ENCODE measurements at regions of chr2 and their contacts with region 1.

Region 1: DNA sequence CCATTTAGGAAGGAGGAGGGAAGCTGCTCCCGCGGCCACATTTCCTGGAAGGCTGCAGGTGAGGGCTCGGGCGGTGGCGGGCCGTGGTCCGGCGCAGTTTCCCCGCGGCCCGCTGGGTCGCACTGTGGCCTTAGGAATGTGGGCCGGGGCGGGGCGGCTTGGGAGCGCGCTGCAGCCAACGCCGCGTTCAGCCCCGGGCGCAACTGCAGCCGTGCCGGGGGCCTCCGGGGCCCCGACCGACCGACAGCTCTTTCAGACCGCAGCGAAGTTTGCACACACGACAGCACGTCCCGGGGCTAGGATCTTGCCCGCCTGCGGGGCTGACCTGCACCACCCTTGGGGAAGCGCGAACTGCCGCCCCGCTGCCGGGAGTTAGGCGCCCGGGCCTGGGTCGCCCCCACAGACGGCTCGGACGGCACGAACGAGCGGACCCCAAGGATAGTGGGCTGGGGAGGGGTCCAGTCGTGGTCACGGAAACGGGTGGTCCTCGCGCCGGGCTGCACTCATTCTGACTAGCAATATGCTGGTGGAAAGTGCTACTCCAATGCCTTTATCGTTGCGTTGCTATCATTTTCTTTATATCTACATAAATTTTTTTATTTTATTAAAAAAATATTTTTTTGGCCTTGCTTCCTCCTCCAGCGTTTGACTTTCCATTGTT is 69.9 kb upstream of the DLX2 start:
- DNase-seq: no peak
- H3K4me3 ChIP-seq: no peak overlapping the region
- H3K27ac ChIP-seq: no peak overlapping the region
- H3K4me1 ChIP-seq: no peaks in the 10 kb centered on the region
- CTCF ChIP-seq: no peak

Region 2: DNA sequence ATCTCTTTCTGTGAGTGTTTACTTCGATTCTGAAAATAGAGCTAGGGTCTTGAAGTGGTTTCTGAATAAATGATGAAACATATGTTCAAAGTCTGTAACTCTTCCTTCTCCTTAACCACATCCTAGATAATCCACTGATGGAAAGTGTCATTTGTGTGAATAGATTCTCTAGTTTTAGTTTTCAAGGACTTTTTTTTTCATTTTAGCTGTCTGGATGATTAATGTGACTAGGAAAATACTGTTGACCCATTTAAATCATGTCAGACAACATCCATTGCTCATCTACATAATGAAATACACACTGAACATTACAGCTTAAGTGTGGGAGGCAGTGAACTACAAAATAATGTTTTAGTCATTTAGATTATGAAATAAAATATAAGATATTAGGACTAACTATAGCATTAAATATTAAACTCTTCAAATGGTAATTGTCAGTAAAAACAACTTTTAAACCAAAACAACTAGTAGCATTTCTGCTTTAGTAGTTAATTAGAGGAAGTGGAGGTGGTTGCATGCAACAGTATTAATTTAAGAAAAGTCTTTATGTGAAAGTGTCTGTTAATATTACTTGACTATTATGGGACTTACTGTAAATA is 126.5 kb before region 1 on chr2:
- CTCF ChIA-PET with region 1: no interaction called
- POLR2A ChIA-PET with region 1: no interaction called
- intact Hi-C with region 1: no loop called
- DNase-seq: no peak
- H3K4me3 ChIP-seq: no peak overlapping the region
- H3K27ac ChIP-seq: no peak overlapping the region
- H3K4me1 ChIP-seq: no peaks in the 10 kb centered on the region
- CTCF ChIP-seq: no peak

Region 3: DNA sequence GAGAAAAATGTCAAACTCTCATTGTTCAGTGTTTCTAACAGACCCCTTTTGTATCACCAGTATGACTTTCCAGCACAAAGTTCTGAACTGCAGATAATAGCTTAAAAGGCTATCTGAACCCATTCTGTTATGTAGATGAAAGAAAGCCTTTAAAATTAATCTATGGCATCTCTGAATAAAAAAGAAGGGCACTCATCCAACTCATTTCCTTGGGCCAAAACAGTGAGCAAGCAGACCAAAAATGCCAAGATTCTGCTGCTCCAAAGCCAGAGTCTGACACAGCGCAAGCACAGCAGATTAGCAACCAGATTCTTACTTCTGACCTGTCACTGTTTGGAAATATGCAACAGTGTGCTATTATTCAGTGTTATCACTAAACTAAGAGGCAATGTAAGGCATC is 232.2 kb after region 1 on chr2:
- CTCF ChIA-PET with region 1: no interaction called
- POLR2A ChIA-PET with region 1: no interaction called
- intact Hi-C with region 1: loop called (anchors 10 kb)
- DNase-seq: no peak
- H3K4me3 ChIP-seq: no peak overlapping the region
- H3K27ac ChIP-seq: no peak overlapping the region
- H3K4me1 ChIP-seq: no peaks in the 10 kb centered on the region
- CTCF ChIP-seq: no peak